ENCODE measurements at regions of chr1 and their contacts with region 1.

Region 1: GRCh38 chr1:46477153-46477929 is 12.3 kb upstream of the DMBX1 start:
- DNase-seq: peak; percentile 61 to 88
- ATAC-seq: peak; percentile 78 to 92
- H3K4me3 ChIP-seq: no peak overlapping the region
- H3K27ac ChIP-seq: no peak overlapping the region
- H3K4me1 ChIP-seq: no peaks in the 10 kb centered on the region
- CTCF ChIP-seq: peak; percentile 77
- EP300 ChIP-seq: no peak
- POLR2A ChIP-seq: no peak
- RAD21 ChIP-seq: peak; percentile 90

Region 2: DNA sequence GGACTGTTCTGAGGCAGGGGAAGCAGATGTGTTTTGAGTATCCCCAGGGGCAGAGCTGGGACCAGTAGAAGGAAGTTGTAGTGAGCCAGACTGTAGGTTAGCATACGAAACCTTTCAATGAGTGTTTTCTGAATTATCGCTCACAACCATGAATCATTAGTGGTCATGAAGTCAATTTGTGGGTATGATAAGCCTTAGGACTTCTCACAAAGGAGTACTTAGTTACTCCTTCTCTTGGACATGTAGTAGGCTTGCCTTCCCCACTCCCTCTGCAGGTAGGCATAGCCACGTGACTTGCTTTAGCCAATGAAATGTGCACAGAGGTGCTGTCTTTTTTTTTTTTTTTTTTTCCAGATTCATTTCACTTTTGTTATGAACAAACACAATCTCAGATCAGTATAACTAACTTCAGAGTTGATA is 107.1 kb before region 1 on chr1:
- CTCF ChIA-PET with region 1: no interaction called
- POLR2A ChIA-PET with region 1: no interaction called
- DNase-seq: no peak
- ATAC-seq: peak; percentile 27 to 54; a peak in 1 of 6 replicates
- H3K4me3 ChIP-seq: no peak overlapping the region
- H3K27ac ChIP-seq: no peak overlapping the region
- H3K4me1 ChIP-seq: no peaks in the 10 kb centered on the region
- CTCF ChIP-seq: no peak
- EP300 ChIP-seq: no peak
- POLR2A ChIP-seq: no peak
- RAD21 ChIP-seq: no peak

Region 3: GRCh38 chr1:46452931-46453325 is 24.4 kb before region 1 on chr1:
- CTCF ChIA-PET with region 1: interaction called, 20 read pairs
- POLR2A ChIA-PET with region 1: no interaction called
- DNase-seq: no peak
- ATAC-seq: no peak
- H3K4me3 ChIP-seq: no peak overlapping the region
- H3K27ac ChIP-seq: no peak overlapping the region
- H3K4me1 ChIP-seq: peaks cover 7% of the 10 kb centered on the region; the same call in 1 of the 3 replicates
- CTCF ChIP-seq: no peak
- EP300 ChIP-seq: no peak
- POLR2A ChIP-seq: no peak
- RAD21 ChIP-seq: no peak

Region 4: DNA sequence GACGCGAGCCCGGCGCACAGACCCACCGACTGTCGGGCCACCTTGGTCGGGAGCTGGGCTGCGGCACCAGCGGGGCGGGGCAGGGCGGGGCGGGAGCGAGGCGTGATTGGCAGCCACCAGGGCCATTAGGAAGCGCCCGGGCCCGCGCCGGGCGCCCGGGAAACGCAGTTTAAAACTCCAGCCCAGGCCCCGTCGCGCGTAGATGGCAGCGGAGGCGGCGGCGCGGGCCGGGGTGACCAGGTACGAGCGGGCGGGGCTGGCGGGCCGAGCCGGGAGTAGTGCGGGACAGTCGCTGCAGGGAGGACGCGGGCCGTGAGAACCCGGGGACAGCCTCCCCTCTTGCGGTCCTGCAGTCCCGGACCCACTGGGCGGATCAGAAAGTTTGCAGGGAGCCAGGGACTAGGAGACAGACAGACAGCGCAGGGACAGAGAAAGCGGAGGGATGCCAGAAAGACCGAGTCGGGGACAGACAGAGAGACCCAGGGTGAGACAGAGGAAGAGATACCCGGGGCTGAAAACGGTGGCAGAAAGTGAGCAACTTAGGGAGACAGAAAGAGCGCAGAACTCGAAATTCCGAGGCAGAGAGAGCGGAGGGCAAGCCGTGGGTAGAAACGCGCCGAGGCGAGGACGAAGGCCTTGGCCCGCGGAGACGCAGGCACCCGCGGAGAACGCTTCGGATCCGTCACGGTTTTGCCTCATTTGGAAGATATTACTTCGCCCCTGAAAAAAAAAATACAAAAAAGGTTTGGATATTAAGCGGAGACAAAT is 12.5 kb after region 1 on chr1 and contains the start of gene DMBX1:
- CTCF ChIA-PET with region 1: interaction called, 33 read pairs
- POLR2A ChIA-PET with region 1: no interaction called
- DNase-seq: peak; percentile 35 to 85
- ATAC-seq: peak; percentile 88 to 94
- H3K4me3 ChIP-seq: peak within 1 kb of the TSS; percentile 56
- H3K27ac ChIP-seq: peak within 1 kb of the TSS; percentile 62 to 85; a peak in 5 of 6 replicates
- H3K4me1 ChIP-seq: peaks cover 4% of the 10 kb centered on the region; the same call in 1 of the 3 replicates
- CTCF ChIP-seq: no peak
- EP300 ChIP-seq: no peak
- POLR2A ChIP-seq: no peak
- RAD21 ChIP-seq: no peak
- polyA plus RNA-seq, gene DMBX1: 0.40 and 0.44 TPM in 2 replicates

Region 5: GRCh38 chr1:46522184-46522968 is 45.0 kb after region 1 on chr1:
- CTCF ChIA-PET with region 1: interaction called, 235 read pairs
- POLR2A ChIA-PET with region 1: no interaction called
- DNase-seq: peak in 1 of 2 experiments; percentile 53
- ATAC-seq: peak; percentile 31 to 32
- H3K4me3 ChIP-seq: no peak overlapping the region
- H3K27ac ChIP-seq: peak overlapping the region; percentile 85 to 97
- H3K4me1 ChIP-seq: peaks cover 77% of the 10 kb centered on the region
- CTCF ChIP-seq: no peak
- EP300 ChIP-seq: peak; percentile 37 to 72; a peak in 3 of 5 replicates
- POLR2A ChIP-seq: no peak
- RAD21 ChIP-seq: no peak

Region 6: DNA sequence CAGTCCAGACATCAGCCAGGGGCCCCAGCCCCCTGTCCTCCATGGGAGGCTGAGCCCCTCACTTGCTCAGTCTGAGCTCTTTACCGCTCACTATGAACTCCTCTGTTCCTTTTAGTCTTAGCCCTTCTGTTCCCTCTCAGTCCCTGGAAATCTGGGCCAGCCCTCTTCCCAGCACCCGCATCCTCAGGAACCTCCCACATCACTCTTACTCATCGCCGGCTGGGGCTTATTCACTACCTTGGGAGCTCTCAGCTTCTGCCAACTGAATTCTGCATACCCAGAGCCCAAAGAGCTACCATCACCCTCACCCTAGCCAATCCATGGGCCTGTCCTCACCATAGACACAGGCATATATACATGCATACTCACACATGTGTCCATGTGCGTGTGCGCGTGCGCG is 62.6 kb after region 1 on chr1:
- CTCF ChIA-PET with region 1: interaction called, 235 read pairs
- POLR2A ChIA-PET with region 1: no interaction called
- DNase-seq: peak in 1 of 2 experiments; percentile 27
- ATAC-seq: peak; percentile 74
- H3K4me3 ChIP-seq: no peak overlapping the region
- H3K27ac ChIP-seq: 0 out of 6 replicates have a peak overlapping the region, but pooled peaks of 1 of the 2 experiments have one; percentile 52
- H3K4me1 ChIP-seq: peaks cover 3% of the 10 kb centered on the region; the same call in 1 of the 3 replicates
- CTCF ChIP-seq: no peak
- EP300 ChIP-seq: no peak
- POLR2A ChIP-seq: no peak
- RAD21 ChIP-seq: no peak

Region 7: DNA sequence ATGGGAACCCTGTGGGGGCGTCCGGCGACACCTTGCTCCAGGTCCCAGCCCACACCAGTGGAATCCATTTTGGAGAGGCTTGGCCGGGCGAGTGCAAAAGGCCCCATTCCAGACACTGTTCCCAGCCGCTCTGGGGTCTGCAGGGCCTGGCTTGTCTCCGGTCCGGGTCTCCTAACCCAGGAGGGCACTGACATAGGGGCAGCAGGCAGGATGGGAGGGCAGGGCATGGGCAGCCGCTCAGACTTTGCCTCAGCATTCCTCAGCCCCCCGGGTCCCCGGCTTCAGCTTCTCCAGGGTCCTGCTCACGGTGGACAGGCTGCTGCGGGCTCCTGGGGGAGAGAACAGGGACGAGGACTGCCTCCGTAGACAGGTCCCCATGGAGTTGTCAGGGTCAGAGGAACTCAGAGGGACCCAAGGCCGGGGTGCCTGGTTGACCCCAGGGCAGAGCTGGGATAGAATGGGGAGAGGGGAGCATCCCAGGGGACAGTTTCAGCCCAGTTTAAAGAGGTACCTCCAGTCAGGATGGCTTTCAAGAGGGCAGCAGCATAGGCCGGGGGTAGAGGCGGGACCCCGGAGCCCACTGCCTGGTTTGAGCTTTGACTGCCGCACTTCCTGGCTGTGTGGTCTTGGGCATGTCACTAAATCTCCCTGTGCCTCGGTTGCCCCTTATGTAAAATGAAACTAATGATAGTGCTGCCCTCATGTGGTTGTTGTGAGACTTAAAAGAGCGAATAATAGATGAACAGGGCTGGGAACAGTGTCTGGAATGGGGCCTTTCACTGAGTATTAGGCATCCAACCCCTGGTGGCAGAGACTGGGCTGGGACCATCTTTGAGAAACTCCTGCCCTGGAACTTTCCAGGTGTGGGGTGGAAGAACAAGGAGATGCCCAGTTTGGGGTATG is 70.4 kb after region 1 on chr1:
- CTCF ChIA-PET with region 1: interaction called, 15 read pairs
- POLR2A ChIA-PET with region 1: no interaction called
- DNase-seq: peak; percentile 34 to 56
- ATAC-seq: peak; percentile 61 to 86; a peak in 5 of 6 replicates
- H3K4me3 ChIP-seq: no peak overlapping the region
- H3K27ac ChIP-seq: no peak overlapping the region
- H3K4me1 ChIP-seq: no peaks in the 10 kb centered on the region
- CTCF ChIP-seq: peak; percentile 54
- EP300 ChIP-seq: no peak
- POLR2A ChIP-seq: no peak
- RAD21 ChIP-seq: peak; percentile 45 to 49

Region 8: DNA sequence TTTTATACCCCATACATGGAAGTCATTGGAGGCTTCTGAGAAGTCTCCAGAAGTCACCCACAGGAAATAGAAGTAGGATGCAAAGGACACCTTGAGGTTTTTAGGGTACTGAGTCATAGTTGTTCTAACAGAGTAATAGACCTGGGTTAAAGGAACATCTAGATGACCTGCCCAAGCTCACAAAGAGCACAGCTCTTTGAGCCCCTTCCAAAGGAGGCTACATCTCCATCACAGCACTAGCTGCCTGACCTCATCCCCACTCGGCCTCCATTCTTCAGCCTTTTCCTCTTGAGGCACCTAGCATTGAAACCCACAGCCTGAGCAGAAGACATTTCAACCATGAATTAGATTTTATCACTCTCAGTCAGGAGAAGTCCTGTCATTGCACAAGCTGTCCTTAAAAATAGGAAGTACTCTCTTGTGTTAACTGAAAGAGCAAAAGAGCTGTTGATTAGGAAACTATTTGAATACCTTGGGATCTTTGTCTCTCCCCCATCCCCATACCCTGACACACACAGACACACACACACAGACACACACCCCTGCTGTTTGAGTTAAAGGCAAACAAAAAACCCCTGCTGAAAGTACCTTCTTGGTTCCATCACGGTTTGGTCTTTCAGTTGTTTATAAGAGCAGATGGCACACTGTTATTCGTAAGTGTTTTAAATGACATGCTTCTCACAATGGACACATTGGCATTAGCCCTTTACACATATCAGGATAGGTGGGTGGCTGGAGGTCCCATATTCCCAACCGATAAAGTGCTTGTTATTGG is 104.5 kb after region 1 on chr1:
- CTCF ChIA-PET with region 1: no interaction called
- POLR2A ChIA-PET with region 1: no interaction called
- DNase-seq: no peak
- ATAC-seq: no peak
- H3K4me3 ChIP-seq: no peak overlapping the region
- H3K27ac ChIP-seq: no peak overlapping the region
- H3K4me1 ChIP-seq: no peaks in the 10 kb centered on the region
- CTCF ChIP-seq: no peak
- EP300 ChIP-seq: no peak
- POLR2A ChIP-seq: no peak
- RAD21 ChIP-seq: no peak